CD8-positive, alpha-beta T cell (primary cell): ENCODE measurements at regions of chr5 and their contacts with region 1.

Region 1: GRCh38 chr5:159331093-159331973 is 1.0 kb upstream of the IL12B start:
- DNase-seq: peak; percentile 56 to 85 (median 78)
- ATAC-seq: peak; percentile 91
- H3K4me3 ChIP-seq: peak overlapping the region; percentile 42 to 49
- H3K4me3 Mint-ChIP-seq: peak overlapping the region; percentile 64
- H3K27ac ChIP-seq: no peak overlapping the region
- H3K27ac Mint-ChIP-seq: no peak overlapping the region
- H3K4me1 ChIP-seq: peaks cover 4% of the 10 kb centered on the region
- H3K4me1 Mint-ChIP-seq: peaks cover 15% of the 10 kb centered on the region
- H3K27me3 ChIP-seq: no peaks in the 10 kb centered on the region
- H3K27me3 Mint-ChIP-seq: peaks cover 16% of the 10 kb centered on the region
- CTCF ChIP-seq: peak; percentile 75

Region 2: GRCh38 chr5:159412284-159413046 is 81.1 kb after region 1 on chr5:
- CTCF ChIA-PET with region 1: interaction called, 7 read pairs
- POLR2A ChIA-PET with region 1: no interaction called
- intact Hi-C with region 1: loop called in 1 of 2 experiments (anchors 5 kb)
- DNase-seq: peak; percentile 49 to 94 (median 65)
- ATAC-seq: peak; percentile 90
- H3K4me3 ChIP-seq: no peak overlapping the region
- H3K4me3 Mint-ChIP-seq: peak overlapping the region; percentile 9
- H3K27ac ChIP-seq: peak overlapping the region; percentile 13 to 47
- H3K27ac Mint-ChIP-seq: peak overlapping the region; percentile 68
- H3K4me1 ChIP-seq: peaks cover 26% of the 10 kb centered on the region
- H3K4me1 Mint-ChIP-seq: peaks cover 40% of the 10 kb centered on the region
- H3K27me3 ChIP-seq: no peaks in the 10 kb centered on the region
- H3K27me3 Mint-ChIP-seq: no peaks in the 10 kb centered on the region
- CTCF ChIP-seq: no peak

Region 3: DNA sequence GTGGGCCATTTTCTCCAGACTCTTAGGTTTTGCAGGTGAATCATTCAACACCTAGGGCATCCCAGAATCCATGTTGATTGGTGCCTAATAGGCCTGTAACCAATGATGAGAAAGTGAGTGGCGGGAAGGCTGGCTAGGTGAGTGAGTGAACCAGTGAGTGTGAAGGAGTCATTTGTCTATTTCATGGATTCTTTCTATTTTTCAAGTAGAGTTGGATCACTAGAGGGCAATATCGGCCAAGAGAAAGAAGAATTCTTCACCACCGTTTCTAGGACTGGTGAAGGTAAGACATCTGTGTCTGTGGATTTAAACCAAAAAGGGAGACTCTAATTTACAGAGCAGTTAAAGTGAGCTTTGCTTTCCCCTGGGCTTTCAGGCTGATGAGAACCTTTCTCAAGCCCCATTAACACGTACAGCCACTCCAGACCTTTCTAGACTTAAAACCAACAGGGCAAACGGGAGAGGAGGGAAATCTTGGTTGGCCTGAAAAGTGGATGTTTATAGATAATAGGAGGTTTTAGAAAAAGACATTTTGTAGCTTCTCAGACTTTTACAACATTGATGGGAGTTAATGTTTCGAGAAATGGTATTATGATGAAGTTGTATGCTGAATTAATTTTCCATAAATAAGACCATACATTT is 113.2 kb after region 1 on chr5:
- CTCF ChIA-PET with region 1: interaction called, 5 read pairs
- POLR2A ChIA-PET with region 1: no interaction called
- intact Hi-C with region 1: loop called (anchors 5 to 10 kb)
- DNase-seq: peak in 2 of 9 experiments; percentile 30 to 64
- ATAC-seq: no peak
- H3K4me3 ChIP-seq: no peak overlapping the region
- H3K4me3 Mint-ChIP-seq: no peak overlapping the region
- H3K27ac ChIP-seq: no peak overlapping the region
- H3K27ac Mint-ChIP-seq: no peak overlapping the region
- H3K4me1 ChIP-seq: no peaks in the 10 kb centered on the region
- H3K4me1 Mint-ChIP-seq: no peaks in the 10 kb centered on the region
- H3K27me3 ChIP-seq: no peaks in the 10 kb centered on the region
- H3K27me3 Mint-ChIP-seq: no peaks in the 10 kb centered on the region
- CTCF ChIP-seq: no peak

Region 4: DNA sequence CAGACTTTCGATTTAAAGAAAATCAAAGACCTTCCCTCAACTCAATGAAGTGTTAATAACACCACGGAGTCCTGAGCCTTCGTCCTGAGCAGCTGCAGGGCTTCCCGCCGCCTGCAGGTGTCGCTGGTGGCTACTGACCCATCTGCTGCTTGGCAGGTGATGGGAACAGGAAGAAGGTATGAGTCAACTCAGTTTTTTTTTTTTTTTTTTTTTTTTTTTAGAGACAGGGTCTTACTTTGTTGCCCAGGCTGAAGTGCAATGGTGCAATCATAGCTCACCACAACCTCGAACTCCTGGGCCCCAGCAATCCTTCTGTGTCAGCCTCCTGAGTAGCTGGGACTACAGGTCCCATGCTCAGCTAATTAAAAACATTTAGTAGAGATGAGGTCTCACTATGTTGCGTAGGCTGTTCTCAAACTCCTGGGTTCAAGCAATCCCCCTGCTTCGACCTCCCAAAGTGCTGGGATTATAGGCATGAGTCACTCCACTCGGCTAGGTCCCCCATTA is 184.6 kb after region 1 on chr5:
- CTCF ChIA-PET with region 1: no interaction called
- POLR2A ChIA-PET with region 1: no interaction called
- intact Hi-C with region 1: loop called in 1 of 2 experiments (anchors 5 kb)
- DNase-seq: peak; percentile 18 to 74 (median 59)
- ATAC-seq: peak; percentile 79
- H3K4me3 ChIP-seq: no peak overlapping the region
- H3K4me3 Mint-ChIP-seq: no peak overlapping the region
- H3K27ac ChIP-seq: no peak overlapping the region
- H3K27ac Mint-ChIP-seq: no peak overlapping the region
- H3K4me1 ChIP-seq: peaks cover 4% of the 10 kb centered on the region
- H3K4me1 Mint-ChIP-seq: peaks cover 5% of the 10 kb centered on the region
- H3K27me3 ChIP-seq: no peaks in the 10 kb centered on the region
- H3K27me3 Mint-ChIP-seq: peaks cover 4% of the 10 kb centered on the region
- CTCF ChIP-seq: peak; percentile 65

Region 5: DNA sequence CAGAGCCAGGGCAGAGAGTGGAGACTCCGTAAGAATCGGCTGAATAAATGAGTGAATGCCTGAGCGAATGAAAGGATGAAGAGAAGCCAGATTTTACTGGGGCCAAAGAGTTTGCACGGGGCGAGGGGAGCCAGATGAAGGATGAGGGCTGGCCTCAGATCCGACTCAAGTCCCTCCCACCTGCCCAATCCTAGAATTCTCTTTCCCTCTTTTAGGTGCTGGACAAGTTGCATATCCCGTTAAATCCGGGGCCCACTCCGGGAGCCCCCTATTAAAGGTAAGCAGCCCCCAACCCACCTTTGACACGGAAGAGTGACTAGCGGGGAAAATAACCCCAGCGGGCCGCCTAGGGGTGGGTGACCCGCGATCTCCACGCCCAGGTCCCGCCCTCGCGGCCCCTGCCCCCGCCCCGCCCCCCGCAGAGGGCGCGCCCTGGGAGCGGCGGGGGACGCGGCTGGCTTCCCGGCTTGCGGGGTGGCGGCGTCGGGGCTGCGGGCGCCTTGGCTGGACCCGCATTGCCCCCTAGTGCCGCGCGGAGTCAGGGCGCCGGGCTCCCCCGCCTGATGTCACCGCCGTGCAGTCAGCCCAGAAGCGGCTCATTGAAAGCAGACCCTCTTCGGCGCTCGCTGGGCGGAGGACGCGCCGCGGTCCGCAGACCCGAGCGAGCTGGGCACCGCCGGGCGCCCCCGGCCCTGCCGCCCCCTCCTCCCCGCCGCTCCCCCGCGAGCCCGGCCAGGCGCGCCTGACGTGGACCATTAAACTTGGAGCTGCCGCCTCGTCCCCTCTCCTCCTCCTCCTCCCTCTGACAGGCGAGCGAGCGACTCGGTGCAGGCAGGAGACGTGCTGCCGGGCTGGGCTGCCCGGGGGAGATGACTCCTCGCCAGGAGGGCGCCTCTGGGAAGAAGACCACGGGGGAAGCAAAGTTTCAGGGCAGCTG is 584.8 kb after region 1 on chr5 and contains the start of gene ADRA1B:
- CTCF ChIA-PET with region 1: interaction called, 4 read pairs
- POLR2A ChIA-PET with region 1: no interaction called
- intact Hi-C with region 1: loop called in 1 of 2 experiments (anchors 5 kb)
- DNase-seq: peak in 8 of 9 experiments; percentile 14 to 59 (median 35)
- ATAC-seq: peak; percentile 69
- H3K4me3 ChIP-seq: no peak within 1 kb of the TSS
- H3K4me3 Mint-ChIP-seq: peak within 1 kb of the TSS; percentile 51
- H3K27ac ChIP-seq: no peak within 1 kb of the TSS
- H3K27ac Mint-ChIP-seq: no peak within 1 kb of the TSS
- H3K4me1 ChIP-seq: peaks cover 5% of the 10 kb centered on the region
- H3K4me1 Mint-ChIP-seq: peaks cover 14% of the 10 kb centered on the region
- H3K27me3 ChIP-seq: peaks cover 7 to 20% of the 10 kb centered on the region in 2 experiments
- H3K27me3 Mint-ChIP-seq: peaks cover 59% of the 10 kb centered on the region
- CTCF ChIP-seq: no peak
- total RNA-seq, gene ADRA1B: not detected

Region 6: GRCh38 chr5:159987031-159987674 is 655.8 kb after region 1 on chr5:
- CTCF ChIA-PET with region 1: interaction called, 15 read pairs
- POLR2A ChIA-PET with region 1: no interaction called
- intact Hi-C with region 1: loop called (anchors 1 kb)
- DNase-seq: peak; percentile 47 to 85 (median 75)
- ATAC-seq: peak; percentile 93
- H3K4me3 ChIP-seq: peak overlapping the region; percentile 34 to 58
- H3K4me3 Mint-ChIP-seq: peak overlapping the region; percentile 75
- H3K27ac ChIP-seq: no peak overlapping the region
- H3K27ac Mint-ChIP-seq: no peak overlapping the region
- H3K4me1 ChIP-seq: no peaks in the 10 kb centered on the region
- H3K4me1 Mint-ChIP-seq: no peaks in the 10 kb centered on the region
- H3K27me3 ChIP-seq: peaks cover 0 to 8% of the 10 kb centered on the region in 2 experiments
- H3K27me3 Mint-ChIP-seq: peaks cover 31% of the 10 kb centered on the region
- CTCF ChIP-seq: peak; percentile 56